Esophagus squamous epithelium (tissue), 5 donors: ENCODE measurements at regions of chr17 and their contacts with region 1.

Region 1: DNA sequence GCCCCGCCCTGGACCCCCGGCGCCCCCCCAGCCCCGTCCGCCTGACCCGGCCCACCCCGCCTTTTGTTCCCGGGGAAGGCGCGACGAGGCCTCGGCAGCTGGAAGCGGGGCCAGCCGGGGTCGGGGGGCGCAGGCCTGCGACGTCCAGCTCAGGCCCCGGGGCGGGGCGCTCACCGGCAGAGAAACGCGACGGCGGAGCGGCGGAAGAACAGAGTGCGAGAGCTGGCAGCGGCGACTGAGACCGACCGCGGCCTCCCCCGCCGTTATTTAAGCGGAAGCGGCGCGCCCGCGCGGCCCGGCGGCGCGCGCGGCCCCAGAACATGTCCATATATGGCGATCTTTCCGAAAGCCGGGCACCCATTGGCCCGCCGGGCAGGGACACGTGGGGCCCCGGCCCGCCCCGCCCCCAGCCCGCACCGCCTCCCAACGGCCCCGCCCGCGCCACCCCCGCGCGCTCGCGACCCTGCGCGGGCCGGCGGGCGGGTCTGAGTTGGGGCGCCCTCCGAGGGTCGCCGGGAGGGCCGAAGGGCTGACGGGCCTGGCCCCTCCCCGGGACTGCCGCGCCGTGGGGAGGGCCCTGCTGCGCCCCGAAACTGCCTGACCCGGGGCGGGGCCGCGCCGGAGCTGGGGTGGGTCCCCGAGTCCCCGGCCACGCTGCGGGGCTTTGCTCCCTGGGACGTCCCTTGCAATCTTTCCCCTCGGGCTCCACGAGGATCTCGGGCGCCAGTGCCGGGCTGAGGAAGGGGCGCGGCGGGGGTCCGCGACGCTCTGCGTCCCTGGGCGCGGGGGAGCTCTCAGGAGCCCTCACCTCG is at the start of gene ACTG1:
- DNase-seq: peak; percentile 73
- H3K4me3 ChIP-seq: peak within 1 kb of the TSS; percentile 91 to 99 (median 97)
- H3K27ac ChIP-seq: peak within 1 kb of the TSS; percentile 99 to 100 (median 100)
- H3K4me1 ChIP-seq: peaks cover 30 to 80% (median 38%) of the 10 kb centered on the region in 3 donors
- H3K27me3 ChIP-seq: no peaks in the 10 kb centered on the region
- CTCF ChIP-seq: peak in 1 of 6 experiments; percentile 5
- POLR2A ChIP-seq: peak in 3 of 4 donors; percentile 28 to 98 (median 97)
- total RNA-seq, gene ACTG1: 3,349 to 6,664 (median 4,433) TPM

Region 2: DNA sequence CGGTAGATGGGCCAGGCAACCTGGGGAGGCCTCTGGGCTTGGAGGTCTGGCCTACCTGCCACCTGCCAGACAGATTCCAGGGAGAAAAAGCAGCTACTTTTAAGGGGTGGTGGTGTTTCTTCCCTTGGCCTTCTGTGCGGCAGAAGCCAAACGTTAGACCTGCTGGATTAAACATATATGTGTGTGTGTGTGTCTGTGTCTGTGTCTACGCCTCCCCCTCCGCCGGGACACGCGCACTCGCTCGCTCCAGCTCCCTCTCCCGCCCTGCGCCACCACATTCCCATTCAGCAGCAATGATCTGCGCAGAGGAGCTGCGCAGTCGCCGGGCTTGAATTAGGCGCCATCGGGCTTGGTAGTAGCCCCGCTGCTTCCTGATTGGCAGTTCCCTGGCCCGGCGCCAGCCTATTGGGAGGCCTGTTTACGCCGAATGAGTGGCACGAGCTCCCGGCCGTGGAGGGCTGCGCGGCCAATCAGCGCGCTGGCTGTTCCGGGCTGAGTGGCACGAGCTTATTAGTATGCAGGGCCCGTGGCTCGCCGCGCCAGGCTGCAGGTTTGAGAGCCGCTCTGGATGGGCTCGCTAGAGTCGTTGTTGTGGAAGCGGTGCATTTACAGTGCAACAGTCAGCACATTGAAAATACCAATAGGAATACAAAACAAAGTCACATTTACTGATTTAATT is 117.7 kb before region 1 on chr17 and contains the start of gene BAHCC1:
- intact Hi-C with region 1: loop called (anchors 5 kb)
- DNase-seq: peak; percentile 97
- H3K4me3 ChIP-seq: peak within 1 kb of the TSS; percentile 62 to 94 (median 76)
- H3K27ac ChIP-seq: peak within 1 kb of the TSS; percentile 94 to 99 (median 98)
- H3K4me1 ChIP-seq: peaks cover 28 to 81% (median 31%) of the 10 kb centered on the region in 3 donors
- H3K27me3 ChIP-seq: peaks cover 0 to 30% (median 0%) of the 10 kb centered on the region in 4 donors
- CTCF ChIP-seq: peak in 1 of 6 experiments; percentile 2
- POLR2A ChIP-seq: peak in 3 of 4 donors; percentile 87 to 96 (median 94)
- total RNA-seq, gene BAHCC1: 3.8 to 10.6 (median 5.4) TPM